PC-9 (cell line): ENCODE measurements at regions of chr12 and their contacts with region 1.

Region 1: DNA sequence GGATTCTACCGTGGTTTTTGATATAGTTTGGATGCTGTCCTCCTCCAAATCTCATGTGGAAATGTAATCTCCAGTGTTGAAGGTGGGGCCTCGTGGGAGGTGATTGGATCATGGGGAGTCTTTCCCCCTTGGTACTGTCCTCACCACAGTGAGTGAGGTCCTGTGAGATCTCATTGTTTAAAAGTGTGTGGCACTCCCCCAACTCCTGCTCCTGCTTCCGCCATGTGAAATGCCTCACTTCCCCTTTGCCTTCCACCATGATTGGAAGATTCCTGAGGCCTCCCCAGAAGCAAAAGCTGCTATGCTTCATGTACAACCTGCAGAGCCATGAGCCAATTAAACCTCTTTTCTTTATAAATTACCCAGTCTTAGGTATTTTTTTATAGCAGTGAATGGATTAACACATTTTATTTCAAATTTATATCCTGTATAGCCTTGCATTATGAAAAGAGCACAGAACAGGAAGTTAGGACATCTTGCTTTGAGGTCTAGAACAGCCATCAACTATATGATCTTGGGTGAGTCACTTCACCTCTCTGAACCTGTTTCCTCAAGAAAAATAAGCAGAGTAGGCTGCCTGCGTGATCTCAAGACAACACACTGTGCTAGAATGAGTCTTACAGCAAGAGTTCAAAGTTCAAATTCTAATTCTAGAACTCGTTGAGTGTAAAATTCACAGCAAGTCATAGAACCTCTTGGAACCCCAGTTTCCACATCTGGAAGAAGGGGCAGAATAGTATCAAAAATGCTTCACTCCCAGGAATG is 160.9 kb upstream of the EEA1 start:
- DNase-seq: peak; percentile 14 to 90
- H3K4me3 ChIP-seq: no peak overlapping the region
- H3K27ac ChIP-seq: peak overlapping the region; percentile 82
- H3K4me1 ChIP-seq: peaks cover 53% of the 10 kb centered on the region
- H3K27me3 ChIP-seq: no peaks in the 10 kb centered on the region
- CTCF ChIP-seq: no peak

Region 2: GRCh38 chr12:92342574-92342973 is 747.4 kb before region 1 on chr12:
- CTCF ChIA-PET with region 1: no interaction called
- POLR2A ChIA-PET with region 1: no interaction called
- intact Hi-C with region 1: no loop called
- DNase-seq: no peak
- H3K4me3 ChIP-seq: no peak overlapping the region
- H3K27ac ChIP-seq: no peak overlapping the region
- H3K4me1 ChIP-seq: no peaks in the 10 kb centered on the region
- H3K27me3 ChIP-seq: no peaks in the 10 kb centered on the region
- CTCF ChIP-seq: no peak

Region 3: DNA sequence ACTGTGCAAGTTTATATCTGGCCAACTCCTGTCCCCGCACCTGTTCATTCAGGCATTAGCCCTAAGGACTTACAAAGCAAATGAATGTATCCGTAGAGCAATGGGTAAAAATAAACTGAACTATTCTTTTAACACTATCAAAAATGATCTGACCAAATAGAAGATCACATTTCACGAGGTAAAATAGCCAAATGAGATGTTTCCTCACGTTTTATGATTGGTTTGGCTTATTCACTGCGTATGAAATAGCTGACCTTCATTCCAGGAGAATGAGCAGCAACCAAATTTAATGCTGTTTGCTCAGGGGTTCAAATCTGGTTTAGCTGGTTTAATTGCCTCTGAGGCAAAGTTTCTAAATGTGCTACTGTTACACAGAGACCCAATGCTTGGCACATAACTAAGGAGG is 55.1 kb after region 1 on chr12:
- CTCF ChIA-PET with region 1: no interaction called
- POLR2A ChIA-PET with region 1: no interaction called
- intact Hi-C with region 1: loop called (anchors 1 kb)
- DNase-seq: peak; percentile 32 to 92
- H3K4me3 ChIP-seq: peak overlapping the region; percentile 9; the same call in 1 of the 2 replicates
- H3K27ac ChIP-seq: peak overlapping the region; percentile 63
- H3K4me1 ChIP-seq: peaks cover 41% of the 10 kb centered on the region
- H3K27me3 ChIP-seq: no peaks in the 10 kb centered on the region
- CTCF ChIP-seq: no peak

Region 4: GRCh38 chr12:93243689-93244513 is 153.9 kb after region 1 on chr12:
- CTCF ChIA-PET with region 1: no interaction called
- POLR2A ChIA-PET with region 1: no interaction called
- intact Hi-C with region 1: loop called (anchors 5 kb)
- DNase-seq: peak; percentile 42 to 84
- H3K4me3 ChIP-seq: no peak overlapping the region
- H3K27ac ChIP-seq: peak overlapping the region; percentile 47
- H3K4me1 ChIP-seq: peaks cover 23% of the 10 kb centered on the region
- H3K27me3 ChIP-seq: no peaks in the 10 kb centered on the region
- CTCF ChIP-seq: no peak

Region 5: GRCh38 chr12:93315907-93316622 is 226.1 kb after region 1 on chr12:
- CTCF ChIA-PET with region 1: no interaction called
- POLR2A ChIA-PET with region 1: no interaction called
- intact Hi-C with region 1: loop called (anchors 2 kb)
- DNase-seq: no peak
- H3K4me3 ChIP-seq: peak overlapping the region; percentile 59
- H3K27ac ChIP-seq: peak overlapping the region; percentile 87
- H3K4me1 ChIP-seq: peaks cover 55% of the 10 kb centered on the region
- H3K27me3 ChIP-seq: no peaks in the 10 kb centered on the region
- CTCF ChIP-seq: no peak